Naive thymus-derived CD4-positive, alpha-beta T cell (primary cell): ENCODE measurements at regions of chr20 and their contacts with region 1.

Region 1: DNA sequence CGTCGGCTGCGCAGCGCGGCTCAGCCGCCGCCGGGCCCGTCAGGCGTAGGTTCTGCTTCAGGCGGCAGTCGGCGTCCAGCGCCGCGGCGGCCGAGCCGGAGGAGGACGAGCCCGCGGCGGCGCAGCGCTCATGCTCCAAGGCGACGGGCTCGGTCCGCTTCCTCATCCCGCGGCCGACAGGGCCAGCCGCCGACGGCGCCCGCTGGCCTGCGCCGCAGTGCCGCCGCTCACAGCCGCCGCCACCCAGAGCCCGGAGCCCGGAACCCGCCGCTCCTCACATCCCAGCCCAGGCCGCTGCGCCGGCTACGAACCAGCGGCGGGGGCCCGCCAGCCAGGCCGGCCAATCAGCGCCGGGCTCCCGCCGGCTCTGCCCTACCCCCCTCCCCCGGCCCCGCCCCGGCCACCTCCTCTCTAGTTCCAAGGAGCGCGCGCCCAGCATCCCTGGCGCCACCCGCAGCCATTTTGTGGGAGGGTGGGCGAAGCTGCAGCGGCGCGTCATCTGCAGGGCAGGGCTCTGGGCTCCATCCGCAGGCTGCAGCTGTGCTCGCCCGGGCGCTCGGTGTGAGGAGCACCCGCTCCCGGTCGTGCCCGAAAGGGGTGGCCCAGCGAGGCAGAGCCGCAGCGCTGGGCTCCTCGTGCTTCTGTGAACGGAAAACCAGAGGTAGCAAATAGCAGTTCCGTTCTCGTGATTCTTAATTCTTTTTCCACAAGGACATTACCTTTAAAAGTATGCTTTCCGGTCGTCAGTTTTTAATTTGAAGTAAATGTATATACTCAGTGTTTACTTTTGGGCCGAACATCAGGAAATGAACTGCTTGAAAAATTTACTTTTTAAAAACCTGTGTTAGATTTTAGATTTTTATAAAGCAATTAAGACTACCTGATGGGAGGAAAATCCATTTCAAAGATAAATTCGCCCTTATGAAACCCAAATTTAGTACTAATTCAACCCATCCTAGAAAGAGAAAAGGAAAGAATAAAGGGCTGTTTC is at the start of gene ABHD12:
- DNase-seq: peak; percentile 80 to 93 (median 89)
- ATAC-seq: peak; percentile 96
- H3K4me3 ChIP-seq: peak within 1 kb of the TSS; percentile 62
- H3K4me3 Mint-ChIP-seq: peak within 1 kb of the TSS; percentile 83 to 94 (median 88)
- H3K27ac ChIP-seq: peak within 1 kb of the TSS; percentile 74
- H3K27ac Mint-ChIP-seq: peak within 1 kb of the TSS; percentile 46 to 96 (median 82)
- H3K4me1 ChIP-seq: no peaks in the 10 kb centered on the region
- H3K4me1 Mint-ChIP-seq: peaks cover 5 to 22% (median 18%) of the 10 kb centered on the region in 7 donors
- H3K27me3 ChIP-seq: no peaks in the 10 kb centered on the region
- H3K27me3 Mint-ChIP-seq: peaks cover 0 to 6% (median 0%) of the 10 kb centered on the region in 5 donors
- total RNA-seq, gene ABHD12: 16.5 to 27.6 (median 22.5) TPM

Region 2: DNA sequence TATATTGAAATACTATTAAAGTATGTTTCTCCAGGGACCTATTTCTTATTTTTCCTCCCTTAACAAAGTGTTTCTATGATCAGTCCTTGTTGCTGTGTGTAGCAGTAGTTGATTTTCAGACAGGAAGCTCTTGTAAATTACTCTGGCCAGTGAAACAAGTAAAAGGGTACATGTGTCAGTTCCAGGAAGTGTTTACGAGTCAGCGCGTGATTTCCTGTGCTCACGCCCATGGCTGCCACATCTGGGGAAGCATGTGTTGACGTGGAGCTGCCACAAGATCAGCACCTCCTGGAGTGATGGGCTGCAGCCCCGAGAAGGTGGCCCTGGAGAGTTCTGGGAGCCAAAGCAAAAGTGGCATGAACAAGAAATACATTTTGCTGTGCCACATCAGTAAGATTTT is 1363.6 kb before region 1 on chr20:
- CTCF ChIA-PET with region 1: no interaction called
- POLR2A ChIA-PET with region 1: no interaction called
- intact Hi-C with region 1: loop called in 1 of 2 experiments (anchors 10 kb)
- DNase-seq: peak; percentile 45 to 93 (median 87)
- ATAC-seq: peak; percentile 99
- H3K4me3 ChIP-seq: peak overlapping the region; percentile 39
- H3K4me3 Mint-ChIP-seq: peak overlapping the region; percentile 26 to 81 (median 71)
- H3K27ac ChIP-seq: peak overlapping the region; percentile 83
- H3K27ac Mint-ChIP-seq: peak overlapping the region; percentile 95 to 99 (median 97)
- H3K4me1 ChIP-seq: peaks cover 17 to 29% of the 10 kb centered on the region in 2 donors
- H3K4me1 Mint-ChIP-seq: peaks cover 20 to 76% (median 62%) of the 10 kb centered on the region in 7 donors
- H3K27me3 ChIP-seq: no peaks in the 10 kb centered on the region
- H3K27me3 Mint-ChIP-seq: no peaks in the 10 kb centered on the region

Region 3: DNA sequence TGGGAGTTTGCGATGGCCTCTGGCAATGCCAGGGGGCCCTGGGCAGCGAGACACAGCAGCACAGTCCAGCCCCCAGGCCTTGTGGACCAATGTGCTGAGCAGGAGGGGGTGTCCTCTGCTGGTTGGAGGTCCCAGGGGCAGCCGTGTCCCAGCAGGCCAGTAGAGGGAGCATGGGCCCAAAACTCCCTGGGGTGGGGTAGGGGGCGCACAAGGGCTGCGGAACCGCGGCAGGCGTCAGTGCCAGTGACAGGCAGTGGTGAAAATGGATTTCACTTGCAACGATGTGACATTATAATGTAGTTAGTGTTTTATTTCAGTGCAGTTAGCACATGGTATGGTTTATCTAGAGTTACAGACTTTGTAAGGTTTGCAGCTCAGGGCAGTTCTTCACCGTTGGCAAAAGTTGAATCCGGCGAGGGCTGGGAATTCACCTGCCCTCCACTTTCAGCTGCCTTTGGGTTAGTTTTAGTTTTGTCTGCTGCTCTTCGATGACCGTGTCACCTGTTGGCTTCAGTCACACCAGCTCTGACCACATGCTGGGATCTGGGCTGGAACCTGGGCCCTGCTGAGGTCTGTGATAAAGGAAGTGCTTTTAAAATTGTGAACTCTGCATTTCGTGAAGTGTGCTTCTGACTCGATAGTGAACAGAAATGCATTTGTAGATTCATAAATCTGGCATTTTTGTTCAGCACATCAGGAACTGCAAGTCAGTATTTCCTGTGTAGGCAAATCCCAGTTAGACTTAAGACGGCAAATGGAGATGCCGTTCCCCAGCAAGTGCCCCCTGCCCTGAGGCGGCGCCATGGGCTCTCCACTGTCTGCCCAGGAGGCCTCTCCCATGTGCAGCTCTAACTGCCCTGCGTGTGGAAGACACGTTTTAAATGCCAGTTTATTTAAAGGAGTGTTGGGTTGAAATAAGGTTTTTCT is 96.1 kb before region 1 on chr20:
- CTCF ChIA-PET with region 1: no interaction called
- POLR2A ChIA-PET with region 1: interaction called, 7 read pairs
- intact Hi-C with region 1: loop called in 1 of 2 experiments (anchors 2 kb)
- DNase-seq: peak; percentile 43 to 74 (median 59)
- ATAC-seq: peak; percentile 90
- H3K4me3 ChIP-seq: no peak overlapping the region
- H3K4me3 Mint-ChIP-seq: no peak overlapping the region
- H3K27ac ChIP-seq: no peak overlapping the region
- H3K27ac Mint-ChIP-seq: peak overlapping the region in 5 of 9 donors; percentile 29 to 78 (median 57)
- H3K4me1 ChIP-seq: no peaks in the 10 kb centered on the region
- H3K4me1 Mint-ChIP-seq: peaks cover 0 to 12% (median 3%) of the 10 kb centered on the region in 7 donors
- H3K27me3 ChIP-seq: no peaks in the 10 kb centered on the region
- H3K27me3 Mint-ChIP-seq: no peaks in the 10 kb centered on the region

Region 4: DNA sequence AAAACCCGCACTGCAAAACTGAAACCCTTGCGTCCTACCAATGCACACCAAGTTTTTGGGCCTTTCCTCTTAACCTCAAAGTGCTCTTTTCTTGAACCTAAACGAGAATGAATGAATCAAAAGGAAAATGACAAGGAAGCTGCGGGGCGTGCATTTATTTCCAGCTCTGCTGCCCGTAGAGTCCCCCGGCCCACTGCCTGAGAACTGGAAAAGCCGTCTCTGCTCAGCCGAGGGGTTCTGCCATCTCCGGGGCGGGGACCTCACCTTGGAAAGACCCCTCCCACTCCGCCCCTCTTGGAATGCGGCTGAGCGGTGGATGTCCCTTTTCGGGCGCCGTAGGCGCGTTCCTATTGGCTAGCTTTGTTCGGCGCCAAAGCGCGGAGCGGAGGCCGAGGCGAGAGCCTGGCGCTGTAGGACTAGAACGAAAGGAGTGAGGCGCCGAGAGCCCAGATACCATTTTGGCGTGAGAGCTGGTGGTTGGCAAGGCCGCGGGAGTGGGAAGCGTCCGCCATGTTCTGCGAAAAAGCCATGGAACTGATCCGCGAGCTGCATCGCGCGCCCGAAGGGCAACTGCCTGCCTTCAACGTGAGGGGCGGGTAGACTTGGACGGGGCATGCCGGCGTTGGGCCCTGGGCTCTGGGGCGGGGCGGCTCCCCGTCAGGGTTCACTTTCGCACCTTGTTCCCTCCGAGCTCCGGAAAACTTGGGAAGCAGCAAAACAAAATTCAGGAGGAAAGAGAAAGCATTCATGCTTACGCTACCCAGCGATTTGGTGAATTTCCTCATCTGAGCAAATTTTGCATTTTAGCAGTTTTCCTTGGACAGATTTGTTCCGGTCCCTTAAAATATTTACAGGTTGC is 16.7 kb after region 1 on chr20 and contains the start of gene GINS1:
- CTCF ChIA-PET with region 1: interaction called, 3 read pairs
- POLR2A ChIA-PET with region 1: no interaction called
- intact Hi-C with region 1: loop called (anchors 1 kb)
- DNase-seq: peak; percentile 56 to 92 (median 69)
- ATAC-seq: peak; percentile 94
- H3K4me3 ChIP-seq: peak within 1 kb of the TSS; percentile 75
- H3K4me3 Mint-ChIP-seq: peak within 1 kb of the TSS; percentile 77 to 95 (median 92)
- H3K27ac ChIP-seq: peak within 1 kb of the TSS; percentile 57
- H3K27ac Mint-ChIP-seq: peak within 1 kb of the TSS; percentile 28 to 93 (median 80)
- H3K4me1 ChIP-seq: peaks cover 6 to 11% of the 10 kb centered on the region in 2 donors
- H3K4me1 Mint-ChIP-seq: peaks cover 4 to 25% (median 13%) of the 10 kb centered on the region in 7 donors
- H3K27me3 ChIP-seq: no peaks in the 10 kb centered on the region
- H3K27me3 Mint-ChIP-seq: no peaks in the 10 kb centered on the region
- total RNA-seq, gene GINS1: 0.44 to 24.9 (median 0.81) TPM